Activated B cell treated with CpG ODN at 0.5 μM for 24 hours (primary cell): ENCODE measurements at regions of chr6 and their contacts with region 1.

Region 1: DNA sequence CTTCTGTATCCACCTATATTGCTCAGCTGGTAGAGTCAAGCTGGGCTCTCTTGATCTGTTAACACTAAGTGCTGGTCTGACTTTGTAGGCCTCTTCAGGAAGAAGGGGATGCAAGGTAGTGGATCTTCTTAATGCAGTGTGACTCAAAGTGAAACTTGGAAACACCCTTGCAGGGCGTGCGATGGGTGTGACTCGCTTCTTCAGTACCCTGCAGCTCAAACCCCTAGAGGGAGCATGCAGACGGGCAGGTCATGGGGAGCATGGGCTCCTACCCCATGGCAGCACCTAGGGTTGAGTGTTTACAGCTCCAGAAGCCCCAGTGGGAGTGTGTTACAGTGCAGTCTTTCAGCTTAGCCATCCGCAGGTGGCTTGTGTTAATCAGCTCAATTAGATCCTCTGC is 757 bp upstream of the SAMD3 start:
- DNase-seq: peak; percentile 28
- ATAC-seq: peak; percentile 97
- H3K4me3 Mint-ChIP-seq: peak overlapping the region; percentile 19
- H3K27ac Mint-ChIP-seq: peak overlapping the region; percentile 41
- H3K4me1 Mint-ChIP-seq: peaks cover 17% of the 10 kb centered on the region
- H3K27me3 Mint-ChIP-seq: no peaks in the 10 kb centered on the region
- CTCF ChIP-seq: no peak

Region 2: DNA sequence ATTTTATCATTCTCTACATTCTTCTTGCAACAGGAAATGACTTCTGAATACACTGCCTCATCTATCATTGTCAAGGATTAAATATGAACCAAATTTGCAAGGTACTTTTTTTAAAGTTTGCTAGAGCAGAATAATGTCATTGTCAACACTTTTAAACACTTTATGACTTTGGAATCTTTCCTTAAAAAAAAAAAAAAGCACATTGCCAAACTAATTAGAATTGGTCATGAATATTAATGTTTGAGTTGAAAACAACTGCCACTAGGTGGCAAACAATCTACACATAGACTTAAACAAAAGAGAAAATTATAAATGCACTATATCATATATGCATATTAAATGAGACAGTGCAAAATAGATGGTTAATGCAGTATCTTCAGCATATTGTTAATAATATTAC is 329.9 kb before region 1 on chr6:
- CTCF ChIA-PET with region 1: no interaction called
- POLR2A ChIA-PET with region 1: no interaction called
- intact Hi-C with region 1: no loop called
- DNase-seq: no peak
- ATAC-seq: no peak
- H3K4me3 Mint-ChIP-seq: no peak overlapping the region
- H3K27ac Mint-ChIP-seq: no peak overlapping the region
- H3K4me1 Mint-ChIP-seq: peaks cover 22% of the 10 kb centered on the region
- H3K27me3 Mint-ChIP-seq: no peaks in the 10 kb centered on the region
- CTCF ChIP-seq: no peak

Region 3: GRCh38 chr6:130105996-130106704 is 117.4 kb before region 1 on chr6:
- CTCF ChIA-PET with region 1: no interaction called
- POLR2A ChIA-PET with region 1: no interaction called
- intact Hi-C with region 1: no loop called
- DNase-seq: no peak
- ATAC-seq: peak; percentile 90
- H3K4me3 Mint-ChIP-seq: peak overlapping the region; percentile 36
- H3K27ac Mint-ChIP-seq: peak overlapping the region; percentile 91
- H3K4me1 Mint-ChIP-seq: peaks cover 45% of the 10 kb centered on the region
- H3K27me3 Mint-ChIP-seq: no peaks in the 10 kb centered on the region
- CTCF ChIP-seq: no peak

Region 4: GRCh38 chr6:130132286-130132701 is 91.2 kb before region 1 on chr6:
- CTCF ChIA-PET with region 1: no interaction called
- POLR2A ChIA-PET with region 1: no interaction called
- intact Hi-C with region 1: loop called (anchors 5 kb)
- DNase-seq: no peak
- ATAC-seq: peak; percentile 75
- H3K4me3 Mint-ChIP-seq: peak overlapping the region; percentile 70
- H3K27ac Mint-ChIP-seq: peak overlapping the region; percentile 96
- H3K4me1 Mint-ChIP-seq: peaks cover 50% of the 10 kb centered on the region
- H3K27me3 Mint-ChIP-seq: no peaks in the 10 kb centered on the region
- CTCF ChIP-seq: no peak

Region 5: DNA sequence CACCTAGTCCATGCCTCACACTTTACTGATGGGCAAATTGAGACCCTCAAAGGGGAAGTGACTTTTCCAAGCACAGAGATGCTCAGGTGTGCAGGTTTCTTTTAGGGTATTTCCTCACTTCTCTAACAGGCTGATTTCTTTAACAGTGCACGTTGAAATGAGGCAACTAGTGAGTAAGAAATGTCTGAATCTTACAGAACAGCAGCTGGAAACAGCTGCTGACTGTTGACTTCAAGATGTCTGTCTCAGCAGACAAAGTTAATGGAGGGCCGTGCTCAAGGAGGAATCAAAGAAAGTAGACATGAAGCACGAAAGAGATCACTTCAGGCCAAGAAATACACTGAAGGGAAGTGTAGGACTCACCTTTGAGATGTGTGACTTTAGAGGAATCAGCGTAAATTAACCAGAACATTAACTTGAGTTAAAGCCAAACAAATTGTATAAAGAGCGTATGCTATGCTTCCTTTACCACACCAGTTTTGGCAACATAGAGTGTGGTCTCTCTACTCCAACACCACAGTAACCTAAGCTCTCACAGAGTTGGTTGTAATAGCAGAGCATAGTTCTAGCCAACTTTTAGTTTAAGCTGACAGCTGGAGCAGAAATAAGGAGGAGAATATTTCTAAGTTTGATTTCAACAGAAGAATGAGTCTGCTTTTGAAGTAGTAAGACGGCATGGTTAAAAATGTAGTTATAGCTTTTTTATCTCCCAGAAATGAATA is 61.7 kb before region 1 on chr6:
- CTCF ChIA-PET with region 1: no interaction called
- POLR2A ChIA-PET with region 1: no interaction called
- intact Hi-C with region 1: loop called (anchors 5 kb)
- DNase-seq: no peak
- ATAC-seq: peak; percentile 68
- H3K4me3 Mint-ChIP-seq: no peak overlapping the region
- H3K27ac Mint-ChIP-seq: peak overlapping the region; percentile 7
- H3K4me1 Mint-ChIP-seq: peaks cover 6% of the 10 kb centered on the region
- H3K27me3 Mint-ChIP-seq: peaks cover 1% of the 10 kb centered on the region
- CTCF ChIP-seq: no peak

Region 6: DNA sequence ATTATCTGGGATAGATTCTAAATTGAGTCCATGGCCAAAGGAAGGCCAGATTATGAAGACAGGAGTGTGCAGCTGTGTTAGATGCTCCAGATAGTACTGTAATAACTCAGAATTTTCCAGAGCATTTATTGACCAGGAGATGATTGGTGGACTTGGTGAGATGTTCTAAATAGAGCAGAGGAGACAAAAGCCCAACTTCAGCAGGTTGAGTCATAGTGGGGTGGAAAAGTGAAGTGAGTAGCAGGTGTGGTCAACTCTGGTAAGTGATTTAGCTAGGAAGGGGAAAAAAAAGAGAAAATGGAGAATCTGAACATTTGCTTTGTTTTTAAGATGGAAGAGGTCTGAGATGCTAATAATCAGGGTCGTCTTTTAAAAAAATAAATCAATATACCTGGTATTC is 369.7 kb after region 1 on chr6:
- CTCF ChIA-PET with region 1: no interaction called
- POLR2A ChIA-PET with region 1: no interaction called
- intact Hi-C with region 1: no loop called
- DNase-seq: no peak
- ATAC-seq: no peak
- H3K4me3 Mint-ChIP-seq: no peak overlapping the region
- H3K27ac Mint-ChIP-seq: no peak overlapping the region
- H3K4me1 Mint-ChIP-seq: no peaks in the 10 kb centered on the region
- H3K27me3 Mint-ChIP-seq: no peaks in the 10 kb centered on the region
- CTCF ChIP-seq: no peak